ENCODE measurements at regions of chr14 and their contacts with region 1.

Region 1: GRCh38 chr14:20613094-20614037 is 22.2 kb upstream of the RNASE12 start:
- DNase-seq: peak; percentile 88 to 89
- ATAC-seq: peak; percentile 90
- H3K4me3 ChIP-seq: peak overlapping the region; percentile 56 to 96
- H3K27ac ChIP-seq: peak overlapping the region in 1 of 2 donors; percentile 84
- H3K4me1 ChIP-seq: peaks cover 0 to 1% of the 10 kb centered on the region in 2 donors
- H3K27me3 ChIP-seq: no peaks in the 10 kb centered on the region

Region 2: DNA sequence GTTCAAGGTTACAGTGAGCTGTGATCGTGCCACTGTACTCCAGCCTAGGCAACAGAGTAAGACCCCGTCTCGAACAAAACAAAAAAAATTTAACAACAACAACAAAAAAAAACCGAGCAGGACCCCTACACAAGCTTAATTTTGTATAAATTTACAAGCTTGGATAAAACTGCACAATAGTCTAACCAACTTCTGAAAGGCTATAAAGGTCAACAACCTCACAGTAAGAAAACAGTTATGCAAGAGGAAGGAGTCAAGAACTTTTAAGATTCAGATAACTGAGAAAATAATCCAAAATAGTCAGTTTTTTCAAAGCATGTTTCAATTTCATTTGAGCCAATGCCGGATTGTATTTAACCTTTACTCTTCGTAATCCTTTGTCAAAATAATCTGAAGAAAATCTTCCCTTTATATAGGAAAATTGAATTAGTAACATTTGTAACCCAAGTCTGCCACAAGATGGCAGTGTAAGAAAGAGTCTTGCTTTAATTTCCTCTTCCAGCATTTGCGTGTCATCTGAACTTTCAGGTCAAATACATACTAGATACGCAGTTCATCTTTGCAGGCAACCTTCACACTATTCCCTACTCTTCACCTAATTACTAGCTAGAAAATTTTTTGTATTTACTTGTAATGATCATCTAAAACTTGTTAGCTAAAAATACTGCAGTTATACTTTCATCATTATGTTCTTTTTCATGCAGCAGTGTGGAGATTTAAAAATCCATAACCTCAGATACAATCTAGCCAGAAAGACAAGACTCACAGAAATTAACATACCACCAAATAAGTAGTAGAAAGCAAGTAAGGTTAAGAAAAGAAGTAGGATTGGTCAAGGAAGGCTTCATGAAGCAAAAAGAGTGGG is 286.1 kb before region 1 on chr14:
- intact Hi-C with region 1: loop called (anchors 5 kb)
- DNase-seq: no peak
- ATAC-seq: peak; percentile 74
- H3K4me3 ChIP-seq: no peak overlapping the region
- H3K27ac ChIP-seq: peak overlapping the region in 1 of 2 donors; percentile 36
- H3K4me1 ChIP-seq: no peaks in the 10 kb centered on the region
- H3K27me3 ChIP-seq: no peaks in the 10 kb centered on the region

Region 3: GRCh38 chr14:20343092-20343861 is 270.1 kb before region 1 on chr14 and contains the start of gene PARP2:
- intact Hi-C with region 1: loop called in 1 of 2 experiments (anchors 5 kb)
- DNase-seq: peak; percentile 98 to 99
- ATAC-seq: peak; percentile 99
- H3K4me3 ChIP-seq: peak within 1 kb of the TSS; percentile 92 to 96
- H3K27ac ChIP-seq: peak within 1 kb of the TSS; percentile 80 to 94
- H3K4me1 ChIP-seq: no peaks in the 10 kb centered on the region
- H3K27me3 ChIP-seq: no peaks in the 10 kb centered on the region
- total RNA-seq, gene PARP2: 13.4 to 19.5 TPM

Region 4: DNA sequence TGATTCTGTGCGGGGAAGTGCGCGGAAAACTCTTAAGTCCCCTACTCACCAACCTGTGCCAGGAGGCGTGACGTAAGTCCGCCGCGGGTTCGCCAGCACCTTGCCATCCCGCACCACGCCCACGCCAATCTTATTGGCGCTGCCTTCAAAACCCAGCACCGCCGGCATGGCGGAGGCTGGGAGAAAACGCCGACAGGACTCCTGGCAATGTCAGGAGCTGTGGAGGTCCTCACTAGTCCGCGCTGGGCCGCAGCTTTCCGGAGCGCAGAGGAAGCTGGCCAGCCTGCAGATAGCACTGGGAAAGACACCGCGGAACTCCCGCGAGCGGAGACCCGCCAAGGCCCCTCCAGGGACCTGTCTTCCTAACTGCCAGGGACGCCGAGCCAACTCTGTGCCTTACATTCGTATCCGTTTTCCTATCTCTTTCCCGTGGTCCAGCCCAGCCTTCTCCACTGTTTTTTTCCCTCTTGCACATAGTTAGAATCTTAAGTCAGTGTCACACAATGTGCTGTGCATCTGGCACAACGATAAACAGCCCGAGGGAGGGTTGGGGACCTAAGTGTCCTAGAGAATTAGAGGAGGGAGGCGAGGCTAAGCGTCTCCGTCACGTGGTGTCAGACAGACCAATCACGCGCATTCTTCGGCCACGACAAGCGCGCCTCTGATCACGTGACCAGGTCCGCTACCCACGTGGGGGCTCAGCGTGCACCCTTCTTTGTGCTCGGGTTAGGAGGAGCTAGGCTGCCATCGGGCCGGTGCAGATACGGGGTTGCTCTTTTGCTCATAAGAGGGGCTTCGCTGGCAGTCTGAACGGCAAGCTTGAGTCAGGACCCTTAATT is 158.6 kb before region 1 on chr14 and contains the starts of genes APEX1 and OSGEP:
- intact Hi-C with region 1: loop called in 1 of 2 experiments (anchors 5 kb)
- DNase-seq: peak; percentile 99
- ATAC-seq: peak; percentile 98
- H3K4me3 ChIP-seq: peak within 1 kb of the TSS; percentile 68 to 91
- H3K27ac ChIP-seq: peak within 1 kb of the TSS; percentile 16 to 75
- H3K4me1 ChIP-seq: no peaks in the 10 kb centered on the region
- H3K27me3 ChIP-seq: no peaks in the 10 kb centered on the region
- total RNA-seq, gene APEX1: 51.1 to 66.0 TPM
- total RNA-seq, gene OSGEP: 27.5 to 40.0 TPM

Region 5: GRCh38 chr14:20530771-20531571 is 82.4 kb before region 1 on chr14:
- intact Hi-C with region 1: loop called (anchors 2 to 5 kb)
- DNase-seq: peak; percentile 81 to 87
- ATAC-seq: no peak
- H3K4me3 ChIP-seq: no peak overlapping the region
- H3K27ac ChIP-seq: no peak overlapping the region
- H3K4me1 ChIP-seq: no peaks in the 10 kb centered on the region
- H3K27me3 ChIP-seq: no peaks in the 10 kb centered on the region

Region 6: GRCh38 chr14:20632682-20633428 is 19.5 kb after region 1 on chr14:
- intact Hi-C with region 1: loop called in 1 of 2 experiments (anchors 2 kb)
- DNase-seq: no peak
- ATAC-seq: peak; percentile 70
- H3K4me3 ChIP-seq: no peak overlapping the region
- H3K27ac ChIP-seq: no peak overlapping the region
- H3K4me1 ChIP-seq: no peaks in the 10 kb centered on the region
- H3K27me3 ChIP-seq: no peaks in the 10 kb centered on the region

Region 7: DNA sequence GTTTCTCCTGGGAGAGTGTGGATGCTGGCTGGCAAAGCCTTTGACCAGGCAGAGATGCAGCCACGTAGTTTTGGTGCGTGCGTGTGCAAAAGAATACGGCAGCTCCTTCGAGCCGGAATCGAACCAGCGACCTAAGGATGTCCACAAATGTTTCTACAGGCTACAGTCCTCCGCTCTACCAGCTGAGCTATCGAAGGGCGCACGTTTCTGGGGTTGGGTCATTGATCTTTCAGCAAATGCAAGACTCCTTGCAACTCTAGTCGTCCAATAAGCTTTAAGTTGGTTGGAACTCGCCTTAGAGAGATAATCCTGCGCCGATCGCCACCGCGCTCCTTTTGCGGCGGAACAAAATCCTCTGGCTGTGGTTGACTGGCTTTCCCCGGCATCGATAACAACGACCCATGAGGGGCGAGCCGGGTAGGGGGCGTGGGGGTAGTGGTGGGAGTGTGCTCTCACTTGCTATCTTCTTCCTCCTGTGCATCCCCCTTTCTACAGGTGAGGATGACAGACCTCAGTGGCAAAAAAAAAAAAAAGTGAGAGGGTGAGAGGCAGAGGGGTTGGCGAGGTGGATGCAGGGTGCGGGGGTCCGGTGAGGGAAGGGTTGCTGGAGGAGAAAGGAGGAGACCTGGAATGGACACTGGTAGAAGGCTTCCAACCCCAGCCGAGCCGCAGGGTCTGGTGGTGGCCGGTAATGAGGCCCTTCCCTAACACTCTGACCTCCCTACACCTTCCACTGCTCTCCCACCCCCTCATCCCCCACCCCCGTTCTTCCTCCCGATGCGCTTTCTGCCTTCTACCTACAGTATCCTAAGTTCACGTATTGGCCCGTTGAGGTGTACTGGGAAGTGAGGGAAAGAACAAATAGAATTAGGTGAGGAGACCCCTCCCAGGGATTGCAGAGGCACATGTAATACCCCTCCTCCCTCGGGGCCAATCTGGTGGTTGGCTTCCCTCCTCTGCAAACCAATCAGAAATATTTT is 39.9 kb after region 1 on chr14:
- intact Hi-C with region 1: no loop called
- DNase-seq: no peak
- ATAC-seq: no peak
- H3K4me3 ChIP-seq: no peak overlapping the region
- H3K27ac ChIP-seq: no peak overlapping the region
- H3K4me1 ChIP-seq: no peaks in the 10 kb centered on the region
- H3K27me3 ChIP-seq: peaks cover 0 to 6% of the 10 kb centered on the region in 2 donors

Region 8: DNA sequence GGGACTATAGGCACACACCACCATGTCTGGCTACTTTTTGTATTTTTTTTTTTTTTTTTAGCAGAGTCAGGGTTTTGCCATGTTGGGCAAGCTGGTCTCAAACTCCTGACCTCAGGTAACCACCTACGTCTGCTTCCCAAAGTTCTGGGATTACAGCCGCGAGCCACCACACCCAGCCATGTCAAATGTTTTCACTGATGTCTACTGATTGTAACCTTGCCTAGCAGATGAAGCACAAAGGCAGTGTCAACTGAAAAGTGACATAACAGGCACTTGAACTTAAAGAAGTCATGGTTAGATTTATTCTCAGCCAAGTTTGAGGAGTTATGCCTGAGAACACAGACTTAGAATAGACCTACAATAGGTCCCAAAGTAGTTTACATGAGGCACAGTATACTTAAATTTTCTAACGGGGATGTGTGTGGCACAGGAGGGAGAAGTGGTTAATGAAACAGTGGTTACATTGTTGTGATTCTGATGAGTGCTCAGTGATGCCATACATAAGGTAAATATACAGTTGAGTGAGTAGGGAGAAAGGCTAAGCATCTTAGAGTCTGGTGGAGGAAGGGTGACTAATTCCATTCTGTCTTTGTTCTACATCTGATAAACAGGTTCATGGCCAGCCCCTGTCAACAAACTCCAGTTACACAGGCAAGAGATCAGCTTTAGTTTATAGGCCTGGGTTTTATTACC is 58.4 kb after region 1 on chr14:
- intact Hi-C with region 1: no loop called
- DNase-seq: no peak
- ATAC-seq: no peak
- H3K4me3 ChIP-seq: no peak overlapping the region
- H3K27ac ChIP-seq: no peak overlapping the region
- H3K4me1 ChIP-seq: no peaks in the 10 kb centered on the region
- H3K27me3 ChIP-seq: no peaks in the 10 kb centered on the region

Region 9: DNA sequence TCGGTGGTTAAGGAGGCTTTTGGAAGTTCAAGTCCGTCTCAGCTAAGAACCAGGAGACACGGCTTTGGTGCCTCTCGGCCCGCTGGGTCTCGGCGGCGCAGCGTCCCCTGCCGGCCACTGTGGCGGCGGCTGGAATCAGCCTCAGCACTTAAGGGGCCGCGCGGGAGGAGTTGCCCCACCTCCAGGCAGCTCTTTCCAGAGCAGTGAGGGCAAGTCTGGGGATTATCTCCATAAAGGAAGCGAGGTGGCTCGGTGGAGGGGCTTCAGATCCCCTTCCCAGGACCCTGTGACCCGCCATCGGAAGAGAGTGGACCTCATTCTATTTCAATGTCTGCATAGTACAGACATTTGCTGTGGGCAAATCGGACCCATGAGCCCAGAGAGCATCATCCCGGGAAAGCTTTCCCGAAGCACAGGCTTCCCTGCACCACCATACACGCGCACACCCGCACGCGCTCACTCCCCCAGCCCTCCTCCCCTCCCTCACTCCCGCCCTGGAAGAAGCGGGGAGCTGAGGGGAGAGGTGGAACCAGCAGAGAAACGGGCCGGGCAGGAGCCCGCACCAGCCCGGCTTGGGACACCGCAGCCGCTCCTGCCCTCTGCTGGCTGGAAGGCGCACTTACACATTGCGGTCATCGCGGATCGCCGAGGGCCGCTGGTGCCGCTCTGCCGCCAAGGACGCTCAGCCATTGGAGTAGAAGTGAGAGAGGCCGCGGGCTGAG is 357.8 kb after region 1 on chr14:
- intact Hi-C with region 1: loop called in 1 of 2 experiments (anchors 10 kb)
- DNase-seq: peak; percentile 92 to 95
- ATAC-seq: peak; percentile 98
- H3K4me3 ChIP-seq: peak overlapping the region; percentile 16 to 48
- H3K27ac ChIP-seq: peak overlapping the region in 1 of 2 donors; percentile 78
- H3K4me1 ChIP-seq: peaks cover 0 to 2% of the 10 kb centered on the region in 2 donors
- H3K27me3 ChIP-seq: no peaks in the 10 kb centered on the region

Measured in aorta (tissue), 5 donors.